ENCODE measurements at regions of chr17 and their contacts with region 1.

Region 1: GRCh38 chr17:8248751-8249607 is at the start of gene PFAS:
- DNase-seq: peak; percentile 79
- ATAC-seq: peak; percentile 64
- H3K4me3 ChIP-seq: peak within 1 kb of the TSS; percentile 100
- H3K27ac ChIP-seq: peak within 1 kb of the TSS; percentile 100
- H3K4me1 ChIP-seq: peaks cover 10% of the 10 kb centered on the region
- H3K27me3 ChIP-seq: no peaks in the 10 kb centered on the region
- CTCF ChIP-seq: no peak
- EP300 ChIP-seq: peak; percentile 30 to 57; a peak in 2 of 4 replicates
- POLR2A ChIP-seq: peak; percentile 92
- RAD21 ChIP-seq: no peak
- polyA plus RNA-seq, gene PFAS: 13.9 to 16.1 TPM

Region 2: DNA sequence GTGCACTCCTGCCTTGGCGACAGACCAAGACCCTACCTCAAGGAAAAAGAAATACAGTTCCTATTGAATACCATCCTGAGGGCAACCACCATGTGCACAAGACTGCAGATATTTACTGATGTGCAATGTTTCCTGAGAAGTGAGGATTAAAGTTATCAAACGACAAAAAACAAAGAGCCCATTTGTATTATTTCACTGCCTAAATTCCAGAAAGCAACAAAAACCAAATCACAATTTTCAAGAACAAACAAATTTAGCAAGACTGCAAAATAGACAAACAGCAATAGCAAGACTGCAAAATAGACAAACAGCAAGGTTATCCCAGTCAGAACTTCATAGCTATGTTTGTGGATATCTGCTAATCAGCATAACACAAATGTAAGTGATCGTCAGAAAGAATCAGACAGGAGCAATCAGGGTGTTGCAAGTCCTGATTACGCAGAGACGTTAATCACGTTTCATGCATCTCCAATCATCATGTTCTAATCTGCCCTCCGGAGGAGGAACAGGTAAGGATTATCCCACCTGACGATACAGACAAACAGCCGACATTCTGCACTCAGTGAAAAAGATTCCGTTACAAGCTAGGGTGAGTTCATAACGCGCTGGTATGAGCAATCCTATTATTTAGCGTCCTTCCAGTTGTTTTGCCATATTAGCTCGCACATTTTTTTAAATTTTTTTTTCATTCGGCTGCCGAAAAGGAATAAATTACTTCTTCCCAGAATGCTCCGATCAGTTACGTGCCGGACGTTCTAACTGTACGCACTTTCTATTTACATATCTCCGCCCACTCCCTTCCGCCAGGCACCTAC is 75.7 kb before region 1 on chr17:
- CTCF ChIA-PET with region 1: no interaction called
- POLR2A ChIA-PET with region 1: interaction called, 5 read pairs
- RAD21 ChIA-PET with region 1: interaction called, 12 read pairs
- SMC1A ChIA-PET with region 1: interaction called, 5 read pairs
- in situ Hi-C with region 1: no loop called
- intact Hi-C with region 1: no loop called
- DNase-seq: peak; percentile 98
- ATAC-seq: peak; percentile 86
- H3K4me3 ChIP-seq: peak overlapping the region; percentile 65
- H3K27ac ChIP-seq: peak overlapping the region; percentile 99
- H3K4me1 ChIP-seq: peaks cover 14% of the 10 kb centered on the region
- H3K27me3 ChIP-seq: no peaks in the 10 kb centered on the region
- CTCF ChIP-seq: no peak
- EP300 ChIP-seq: peak in 1 of 2 experiments; percentile 59; a peak in 2 of 4 replicates
- POLR2A ChIP-seq: peak; percentile 99
- RAD21 ChIP-seq: no peak

Region 3: GRCh38 chr17:8209909-8210760 is 38.8 kb before region 1 on chr17 and contains the start of gene AURKB:
- CTCF ChIA-PET with region 1: interaction called, 4 read pairs
- POLR2A ChIA-PET with region 1: interaction called, 40 read pairs
- RAD21 ChIA-PET with region 1: interaction called, 7 read pairs
- SMC1A ChIA-PET with region 1: no interaction called
- in situ Hi-C with region 1: no loop called
- intact Hi-C with region 1: no loop called
- DNase-seq: peak; percentile 91
- ATAC-seq: peak; percentile 94
- H3K4me3 ChIP-seq: peak within 1 kb of the TSS; percentile 95
- H3K27ac ChIP-seq: peak within 1 kb of the TSS; percentile 83
- H3K4me1 ChIP-seq: no peaks in the 10 kb centered on the region
- H3K27me3 ChIP-seq: no peaks in the 10 kb centered on the region
- CTCF ChIP-seq: no peak
- EP300 ChIP-seq: no peak; a peak in 1 of 4 replicates
- POLR2A ChIP-seq: peak; percentile 96
- RAD21 ChIP-seq: no peak
- polyA plus RNA-seq, gene AURKB: 107 to 121 TPM

Region 4: GRCh38 chr17:8237175-8237574 is 11.8 kb before region 1 on chr17:
- CTCF ChIA-PET with region 1: interaction called, 4 read pairs
- POLR2A ChIA-PET with region 1: interaction called, 6 read pairs
- RAD21 ChIA-PET with region 1: interaction called, 4 read pairs
- SMC1A ChIA-PET with region 1: interaction called, 10 read pairs
- in situ Hi-C with region 1: no loop called
- intact Hi-C with region 1: no loop called
- DNase-seq: no peak
- ATAC-seq: no peak
- H3K4me3 ChIP-seq: no peak overlapping the region
- H3K27ac ChIP-seq: no peak overlapping the region
- H3K4me1 ChIP-seq: no peaks in the 10 kb centered on the region
- H3K27me3 ChIP-seq: no peaks in the 10 kb centered on the region
- CTCF ChIP-seq: no peak
- EP300 ChIP-seq: no peak
- POLR2A ChIP-seq: no peak
- RAD21 ChIP-seq: no peak

Region 5: DNA sequence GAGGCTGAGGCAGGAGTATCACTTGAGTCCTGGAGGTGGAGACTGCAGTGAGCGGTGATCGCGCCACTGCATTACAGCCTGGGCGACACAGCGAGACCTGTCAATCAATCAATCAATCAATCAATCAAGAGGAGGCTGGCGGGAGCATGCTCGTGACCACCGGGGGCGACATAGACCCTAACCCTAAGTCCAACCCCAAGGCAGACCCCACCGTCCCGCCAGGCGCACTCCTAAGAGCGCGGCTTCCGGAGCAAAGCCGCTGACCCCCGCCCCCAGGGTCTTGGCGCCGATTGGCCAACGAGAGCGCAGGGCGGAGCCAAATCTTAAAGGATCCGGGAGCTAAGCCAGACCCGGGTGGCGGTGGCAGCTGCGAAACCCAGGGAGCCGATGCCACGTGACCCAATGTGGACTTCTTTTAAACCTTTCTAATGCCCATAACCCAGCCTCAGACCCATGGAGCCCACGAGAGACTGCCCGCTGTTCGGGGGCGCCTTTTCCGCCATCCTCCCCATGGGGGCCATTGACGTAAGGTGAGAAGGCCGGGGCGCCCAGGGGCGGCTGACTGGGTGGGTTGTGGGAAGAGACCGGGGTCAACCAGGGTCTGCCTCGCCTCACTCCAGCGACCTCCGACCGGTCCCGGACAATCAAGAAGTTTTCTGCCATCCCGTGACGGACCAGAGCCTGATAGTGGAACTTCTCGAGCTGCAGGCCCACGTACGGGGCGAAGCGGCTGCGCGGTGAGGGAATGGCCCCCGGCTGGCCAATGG is 39.5 kb after region 1 on chr17 and contains the start of gene RANGRF:
- CTCF ChIA-PET with region 1: interaction called, 13 read pairs
- POLR2A ChIA-PET with region 1: interaction called, 19 read pairs
- RAD21 ChIA-PET with region 1: interaction called, 6 read pairs
- SMC1A ChIA-PET with region 1: interaction called, 4 read pairs
- in situ Hi-C with region 1: no loop called
- intact Hi-C with region 1: loop called (anchors 2 kb)
- DNase-seq: peak; percentile 40
- ATAC-seq: peak; percentile 95
- H3K4me3 ChIP-seq: peak within 1 kb of the TSS; percentile 93
- H3K27ac ChIP-seq: peak within 1 kb of the TSS; percentile 92
- H3K4me1 ChIP-seq: peaks cover 19% of the 10 kb centered on the region
- H3K27me3 ChIP-seq: no peaks in the 10 kb centered on the region
- CTCF ChIP-seq: no peak
- EP300 ChIP-seq: no peak
- POLR2A ChIP-seq: peak; percentile 70
- RAD21 ChIP-seq: no peak
- polyA plus RNA-seq, gene RANGRF: 123 to 181 TPM

Region 6: GRCh38 chr17:8294814-8295316 is 45.9 kb after region 1 on chr17:
- CTCF ChIA-PET with region 1: interaction called, 16 read pairs
- POLR2A ChIA-PET with region 1: interaction called, 30 read pairs
- RAD21 ChIA-PET with region 1: interaction called, 26 read pairs
- SMC1A ChIA-PET with region 1: interaction called, 10 read pairs
- in situ Hi-C with region 1: no loop called
- intact Hi-C with region 1: loop called (anchors 2 kb)
- DNase-seq: no peak
- ATAC-seq: no peak
- H3K4me3 ChIP-seq: peak overlapping the region; percentile 62
- H3K27ac ChIP-seq: peak overlapping the region; percentile 41
- H3K4me1 ChIP-seq: peaks cover 21% of the 10 kb centered on the region
- H3K27me3 ChIP-seq: no peaks in the 10 kb centered on the region
- CTCF ChIP-seq: no peak
- EP300 ChIP-seq: no peak
- POLR2A ChIP-seq: no peak
- RAD21 ChIP-seq: no peak

Region 7: DNA sequence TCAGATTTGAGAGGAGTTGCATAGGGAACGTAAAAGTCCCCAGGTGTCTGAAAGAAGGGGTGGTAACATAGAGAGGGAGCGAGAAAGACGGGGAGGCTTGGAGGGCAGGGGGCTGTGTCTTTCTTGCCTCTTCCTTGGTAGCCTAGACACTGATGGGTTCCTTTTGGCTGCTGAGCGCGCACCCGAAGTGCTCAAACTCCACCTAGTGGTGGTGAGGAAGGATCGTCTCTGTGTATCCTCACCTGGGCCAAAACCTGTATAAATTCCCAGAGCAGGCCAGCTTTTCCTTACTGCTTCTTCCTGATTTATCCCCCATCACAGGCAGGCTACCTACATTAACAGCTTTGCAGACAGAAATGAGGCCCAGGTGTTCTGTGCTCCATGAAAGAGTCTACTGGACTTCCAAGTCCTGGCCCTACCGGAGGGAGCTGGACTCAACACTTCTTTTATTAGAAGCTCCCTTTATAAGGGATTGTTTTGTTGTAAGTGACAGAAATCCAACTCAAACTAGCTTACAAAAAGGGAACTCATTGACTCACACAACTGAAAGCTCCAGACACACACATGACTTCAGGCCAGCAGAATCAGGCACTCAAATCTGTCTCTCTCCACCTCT is 51.8 kb after region 1 on chr17:
- CTCF ChIA-PET with region 1: interaction called, 16 read pairs
- POLR2A ChIA-PET with region 1: interaction called, 30 read pairs
- RAD21 ChIA-PET with region 1: interaction called, 26 read pairs
- SMC1A ChIA-PET with region 1: interaction called, 10 read pairs
- in situ Hi-C with region 1: no loop called
- intact Hi-C with region 1: loop called (anchors 2 kb)
- DNase-seq: peak; percentile 31
- ATAC-seq: peak; percentile 98
- H3K4me3 ChIP-seq: no peak overlapping the region
- H3K27ac ChIP-seq: no peak overlapping the region
- H3K4me1 ChIP-seq: no peaks in the 10 kb centered on the region
- H3K27me3 ChIP-seq: no peaks in the 10 kb centered on the region
- CTCF ChIP-seq: peak; percentile 86 to 96 (median 90); a peak in 5 of 6 replicates
- EP300 ChIP-seq: no peak
- POLR2A ChIP-seq: no peak
- RAD21 ChIP-seq: peak; percentile 90

Region 8: DNA sequence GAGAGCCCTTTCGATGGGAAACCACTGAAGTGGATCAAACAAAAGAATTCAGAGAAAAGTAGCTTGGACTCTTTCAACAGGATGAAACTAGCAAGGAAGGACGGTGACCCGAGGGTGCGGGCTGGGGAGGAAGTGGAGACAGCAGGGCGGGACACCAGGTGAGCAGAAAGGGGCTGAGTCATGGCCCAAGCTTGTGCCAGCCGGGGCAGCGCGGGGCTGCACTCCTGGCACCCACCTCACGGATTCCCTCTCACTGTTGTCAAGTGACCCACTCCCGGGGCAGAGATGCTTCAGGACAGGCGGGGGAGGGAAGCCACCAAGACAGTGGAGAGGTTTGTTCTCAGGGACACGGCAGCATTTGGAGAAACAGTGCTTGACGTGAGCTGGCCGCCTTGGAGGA is 159.4 kb after region 1 on chr17:
- CTCF ChIA-PET with region 1: no interaction called
- POLR2A ChIA-PET with region 1: no interaction called
- RAD21 ChIA-PET with region 1: no interaction called
- SMC1A ChIA-PET with region 1: no interaction called
- in situ Hi-C with region 1: no loop called
- intact Hi-C with region 1: no loop called
- DNase-seq: no peak
- ATAC-seq: no peak
- H3K4me3 ChIP-seq: no peak overlapping the region
- H3K27ac ChIP-seq: no peak overlapping the region
- H3K4me1 ChIP-seq: no peaks in the 10 kb centered on the region
- H3K27me3 ChIP-seq: peaks cover 0 to 3% of the 10 kb centered on the region in 2 experiments; a peak in 2 of 4 replicates
- CTCF ChIP-seq: no peak
- EP300 ChIP-seq: no peak
- POLR2A ChIP-seq: no peak
- RAD21 ChIP-seq: no peak

Region 9: DNA sequence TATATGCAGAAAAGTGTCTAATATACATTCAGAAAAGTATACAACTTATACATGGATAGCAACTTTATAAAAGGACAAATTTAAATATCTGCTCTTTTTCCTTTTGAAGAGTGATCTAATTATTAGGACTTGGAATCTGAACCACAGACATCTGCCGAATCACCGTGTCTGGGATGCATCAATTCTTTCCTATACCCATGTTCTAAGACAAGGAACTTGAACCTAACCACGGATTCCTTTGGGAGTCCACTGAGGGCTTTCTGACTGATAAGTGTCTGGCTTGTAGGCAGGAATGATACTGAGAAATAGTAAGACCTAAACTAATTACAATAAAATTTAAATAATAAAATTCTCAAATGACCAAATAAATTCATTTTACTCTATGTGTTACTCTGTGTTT is 240.9 kb after region 1 on chr17:
- CTCF ChIA-PET with region 1: no interaction called
- POLR2A ChIA-PET with region 1: no interaction called
- RAD21 ChIA-PET with region 1: no interaction called
- SMC1A ChIA-PET with region 1: no interaction called
- in situ Hi-C with region 1: no loop called
- intact Hi-C with region 1: no loop called
- DNase-seq: no peak
- ATAC-seq: no peak
- H3K4me3 ChIP-seq: no peak overlapping the region
- H3K27ac ChIP-seq: no peak overlapping the region
- H3K4me1 ChIP-seq: no peaks in the 10 kb centered on the region
- H3K27me3 ChIP-seq: no peaks in the 10 kb centered on the region
- CTCF ChIP-seq: no peak
- EP300 ChIP-seq: no peak
- POLR2A ChIP-seq: no peak
- RAD21 ChIP-seq: no peak